ENCODE measurements at regions of chr6 and their contacts with region 1.

Region 1: GRCh38 chr6:6756526-6756925 is 168.0 kb downstream of the LY86 start:
- DNase-seq: no peak
- ATAC-seq: no peak
- H3K4me3 ChIP-seq: no peak overlapping the region
- H3K4me3 Mint-ChIP-seq: no peak overlapping the region
- H3K27ac ChIP-seq: no peak overlapping the region
- H3K27ac Mint-ChIP-seq: no peak overlapping the region
- H3K4me1 ChIP-seq: peaks cover 2 to 7% of the 10 kb centered on the region in 2 experiments
- H3K4me1 Mint-ChIP-seq: peaks cover 6 to 8% (median 6%) of the 10 kb centered on the region in 3 donors
- H3K27me3 ChIP-seq: peaks cover 0 to 13% of the 10 kb centered on the region in 2 experiments
- H3K27me3 Mint-ChIP-seq: peaks cover 3 to 9% of the 10 kb centered on the region in 2 donors

Region 2: DNA sequence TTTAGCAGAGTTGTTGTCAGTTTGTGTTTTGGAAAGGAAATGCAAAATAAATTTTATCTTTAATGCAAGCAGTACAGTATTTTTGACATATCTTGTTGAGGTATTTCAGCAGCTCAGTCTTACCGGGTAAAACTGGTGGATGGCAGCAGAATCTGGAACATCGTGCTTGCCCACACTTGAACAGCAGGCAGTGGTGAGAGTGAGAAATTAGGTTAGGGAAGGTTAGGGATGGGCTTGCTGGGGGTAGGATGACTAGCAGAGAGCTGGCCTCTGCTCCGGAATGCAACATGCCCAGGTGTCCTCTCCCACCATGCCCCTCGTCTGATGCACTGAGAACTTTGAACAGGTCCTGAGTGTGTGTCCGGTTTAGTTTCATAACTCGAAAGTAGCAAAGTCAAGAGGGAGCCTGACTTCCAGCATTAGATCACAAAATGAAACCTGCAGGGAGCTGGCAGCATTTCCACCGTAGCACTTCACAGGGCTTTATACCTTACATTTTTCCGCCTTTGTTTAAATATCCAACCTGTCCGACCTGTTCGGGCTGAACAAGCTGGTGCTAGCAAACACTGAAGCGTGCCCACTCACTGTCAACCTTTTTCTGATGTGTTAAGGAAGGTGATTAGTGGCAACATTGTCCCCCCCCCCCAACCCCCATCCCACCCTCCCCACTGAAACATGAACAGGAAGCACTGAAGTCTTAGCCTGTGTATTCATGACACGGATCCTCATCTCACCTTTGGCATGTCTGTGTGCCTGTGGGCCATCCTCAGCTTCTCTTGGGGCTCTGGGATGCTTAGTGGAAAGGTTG is 444.5 kb after region 1 on chr6:
- CTCF ChIA-PET with region 1: interaction called in 1 of 2 experiments, 10 read pairs
- POLR2A ChIA-PET with region 1: no interaction called
- DNase-seq: no peak
- ATAC-seq: no peak
- H3K4me3 ChIP-seq: no peak overlapping the region
- H3K4me3 Mint-ChIP-seq: no peak overlapping the region
- H3K27ac ChIP-seq: no peak overlapping the region
- H3K27ac Mint-ChIP-seq: no peak overlapping the region
- H3K4me1 ChIP-seq: peaks cover 4 to 16% of the 10 kb centered on the region in 2 experiments
- H3K4me1 Mint-ChIP-seq: peaks cover 25 to 40% (median 35%) of the 10 kb centered on the region in 3 donors
- H3K27me3 ChIP-seq: no peaks in the 10 kb centered on the region
- H3K27me3 Mint-ChIP-seq: no peaks in the 10 kb centered on the region